PC-9 (cell line): ENCODE measurements at regions of chr22 and their contacts with region 1.

Region 1: DNA sequence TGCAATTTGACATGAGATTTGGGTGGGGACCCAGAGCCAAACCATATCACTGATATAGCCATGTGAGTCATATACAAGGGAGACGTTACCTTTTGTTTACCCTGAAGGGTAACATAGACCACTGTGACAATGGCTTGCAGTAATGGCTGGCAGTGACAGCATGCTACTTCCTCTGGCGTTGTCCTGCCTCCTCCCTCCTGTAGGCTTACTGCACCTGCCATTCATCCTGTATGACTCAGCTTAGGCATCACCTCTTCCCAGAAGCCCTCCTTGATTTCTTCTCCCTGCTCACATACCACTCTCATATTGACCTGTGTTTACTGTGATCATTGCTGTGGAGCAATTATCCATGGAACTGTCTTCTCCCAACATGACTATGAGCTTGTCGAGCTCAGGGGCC is 12.0 kb upstream of the PVALB start:
- DNase-seq: peak; percentile 22 to 67
- H3K4me3 ChIP-seq: no peak overlapping the region
- H3K27ac ChIP-seq: no peak overlapping the region
- H3K4me1 ChIP-seq: peaks cover 4% of the 10 kb centered on the region; the same call in 1 of the 2 replicates
- H3K27me3 ChIP-seq: no peaks in the 10 kb centered on the region
- CTCF ChIP-seq: no peak

Region 2: GRCh38 chr22:37148742-37149665 is 320.2 kb after region 1 on chr22:
- CTCF ChIA-PET with region 1: no interaction called
- POLR2A ChIA-PET with region 1: interaction called, 11 read pairs
- intact Hi-C with region 1: no loop called
- DNase-seq: no peak
- H3K4me3 ChIP-seq: no peak overlapping the region
- H3K27ac ChIP-seq: no peak overlapping the region
- H3K4me1 ChIP-seq: no peaks in the 10 kb centered on the region
- H3K27me3 ChIP-seq: no peaks in the 10 kb centered on the region
- CTCF ChIP-seq: no peak